CD4-positive, alpha-beta memory T cell (primary cell): ENCODE measurements at regions of chr17 and their contacts with region 1.

Region 1: GRCh38 chr17:28925912-28926365 is 23.1 kb upstream of the DHRS13 start:
- DNase-seq: peak; percentile 87 to 92 (median 89)
- H3K4me3 ChIP-seq: peak overlapping the region in 1 of 2 donors; percentile 15
- H3K4me3 Mint-ChIP-seq: peak overlapping the region; percentile 49 to 80 (median 60)
- H3K27ac ChIP-seq: peak overlapping the region; percentile 77
- H3K27ac Mint-ChIP-seq: peak overlapping the region; percentile 90 to 98 (median 96)
- H3K4me1 ChIP-seq: peaks cover 56% of the 10 kb centered on the region
- H3K4me1 Mint-ChIP-seq: peaks cover 49 to 79% (median 59%) of the 10 kb centered on the region in 4 donors
- H3K27me3 ChIP-seq: no peaks in the 10 kb centered on the region
- H3K27me3 Mint-ChIP-seq: no peaks in the 10 kb centered on the region

Region 2: GRCh38 chr17:28880572-28880945 is 45.4 kb before region 1 on chr17:
- CTCF ChIA-PET with region 1: no interaction called
- POLR2A ChIA-PET with region 1: no interaction called
- intact Hi-C with region 1: no loop called
- DNase-seq: no peak
- H3K4me3 ChIP-seq: no peak overlapping the region
- H3K4me3 Mint-ChIP-seq: no peak overlapping the region
- H3K27ac ChIP-seq: no peak overlapping the region
- H3K27ac Mint-ChIP-seq: peak overlapping the region in 1 of 7 donors; percentile 53
- H3K4me1 ChIP-seq: no peaks in the 10 kb centered on the region
- H3K4me1 Mint-ChIP-seq: peaks cover 0 to 7% (median 3%) of the 10 kb centered on the region in 4 donors
- H3K27me3 ChIP-seq: no peaks in the 10 kb centered on the region
- H3K27me3 Mint-ChIP-seq: no peaks in the 10 kb centered on the region

Region 3: DNA sequence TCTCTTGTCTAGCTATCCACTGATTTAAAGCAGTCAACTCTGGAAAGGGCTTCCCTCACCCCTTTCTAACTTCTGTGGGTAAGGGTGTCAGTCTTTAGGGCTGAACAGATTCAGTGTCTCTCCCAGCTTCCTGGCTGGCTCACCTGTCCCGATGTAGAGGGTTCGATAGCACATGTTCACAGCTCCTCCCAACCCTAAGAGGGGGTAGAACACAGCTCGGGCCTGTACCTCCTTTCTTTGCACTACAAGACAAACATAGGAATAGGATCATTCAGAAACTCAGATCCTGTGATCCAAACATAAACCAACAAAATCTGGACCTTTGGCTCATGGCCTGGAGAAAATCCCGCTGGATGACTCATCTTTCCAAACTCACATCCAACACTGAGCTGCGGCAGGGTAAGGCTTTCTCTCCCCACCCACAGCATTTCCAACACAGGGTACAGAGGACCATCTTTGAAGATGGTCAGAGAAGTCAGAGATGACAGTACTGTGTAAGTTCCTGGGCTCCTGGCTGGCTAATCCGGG is 17.2 kb before region 1 on chr17:
- CTCF ChIA-PET with region 1: interaction called, 8 read pairs
- POLR2A ChIA-PET with region 1: interaction called, 13 read pairs
- intact Hi-C with region 1: loop called (anchors 1 kb)
- DNase-seq: no peak
- H3K4me3 ChIP-seq: no peak overlapping the region
- H3K4me3 Mint-ChIP-seq: peak overlapping the region in 1 of 8 donors; percentile 38
- H3K27ac ChIP-seq: no peak overlapping the region
- H3K27ac Mint-ChIP-seq: peak overlapping the region in 3 of 7 donors; percentile 15 to 55 (median 42)
- H3K4me1 ChIP-seq: no peaks in the 10 kb centered on the region
- H3K4me1 Mint-ChIP-seq: peaks cover 0 to 5% (median 1%) of the 10 kb centered on the region in 4 donors
- H3K27me3 ChIP-seq: no peaks in the 10 kb centered on the region
- H3K27me3 Mint-ChIP-seq: no peaks in the 10 kb centered on the region

Region 4: DNA sequence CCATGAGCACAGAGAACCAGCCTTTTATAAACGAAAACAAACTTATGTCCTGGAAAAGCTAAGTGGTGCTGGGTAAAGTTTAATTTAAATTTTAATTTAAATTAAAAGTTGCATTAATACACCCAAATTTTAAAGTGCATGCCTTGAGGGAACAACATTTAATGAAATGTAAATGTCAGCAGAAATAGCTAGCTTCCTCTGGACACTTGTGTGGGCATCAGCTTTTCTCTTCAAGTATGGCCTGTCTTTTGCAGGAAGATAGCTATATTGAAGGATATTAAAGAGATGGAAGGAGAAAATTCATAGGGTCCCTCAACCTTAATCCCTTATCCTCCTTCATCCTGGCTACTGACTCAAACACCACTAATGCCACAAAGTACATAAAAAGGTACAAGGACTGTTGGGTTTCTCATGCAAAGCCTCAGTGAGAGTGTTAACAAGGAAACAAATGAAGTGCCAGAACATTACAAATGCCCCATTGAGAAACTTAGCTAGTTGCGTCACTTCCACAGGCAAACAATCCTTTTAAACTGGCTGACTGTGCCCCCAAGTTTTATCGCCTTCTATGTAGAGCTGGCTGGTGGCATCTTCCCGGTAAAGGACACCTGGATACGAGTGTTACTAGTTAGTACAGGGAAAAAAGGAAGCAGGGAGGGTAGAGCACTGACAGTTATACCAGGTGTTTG is 11.2 kb after region 1 on chr17:
- CTCF ChIA-PET with region 1: interaction called, 6 read pairs
- POLR2A ChIA-PET with region 1: interaction called, 53 read pairs
- intact Hi-C with region 1: no loop called
- DNase-seq: no peak
- H3K4me3 ChIP-seq: no peak overlapping the region
- H3K4me3 Mint-ChIP-seq: peak overlapping the region in 2 of 8 donors; percentile 6
- H3K27ac ChIP-seq: no peak overlapping the region
- H3K27ac Mint-ChIP-seq: peak overlapping the region in 5 of 7 donors; percentile 8 to 81 (median 42)
- H3K4me1 ChIP-seq: peaks cover 77% of the 10 kb centered on the region
- H3K4me1 Mint-ChIP-seq: peaks cover 52 to 95% (median 72%) of the 10 kb centered on the region in 4 donors
- H3K27me3 ChIP-seq: no peaks in the 10 kb centered on the region
- H3K27me3 Mint-ChIP-seq: no peaks in the 10 kb centered on the region

Region 5: GRCh38 chr17:29031488-29031887 is 105.5 kb after region 1 on chr17:
- CTCF ChIA-PET with region 1: no interaction called
- POLR2A ChIA-PET with region 1: no interaction called
- intact Hi-C with region 1: no loop called
- DNase-seq: no peak
- H3K4me3 ChIP-seq: no peak overlapping the region
- H3K4me3 Mint-ChIP-seq: no peak overlapping the region
- H3K27ac ChIP-seq: no peak overlapping the region
- H3K27ac Mint-ChIP-seq: no peak overlapping the region
- H3K4me1 ChIP-seq: no peaks in the 10 kb centered on the region
- H3K4me1 Mint-ChIP-seq: no peaks in the 10 kb centered on the region
- H3K27me3 ChIP-seq: peaks cover 4% of the 10 kb centered on the region
- H3K27me3 Mint-ChIP-seq: peaks cover 49 to 50% of the 10 kb centered on the region in 2 donors